ENCODE measurements at regions of chr10 and their contacts with region 1.

Region 1: DNA sequence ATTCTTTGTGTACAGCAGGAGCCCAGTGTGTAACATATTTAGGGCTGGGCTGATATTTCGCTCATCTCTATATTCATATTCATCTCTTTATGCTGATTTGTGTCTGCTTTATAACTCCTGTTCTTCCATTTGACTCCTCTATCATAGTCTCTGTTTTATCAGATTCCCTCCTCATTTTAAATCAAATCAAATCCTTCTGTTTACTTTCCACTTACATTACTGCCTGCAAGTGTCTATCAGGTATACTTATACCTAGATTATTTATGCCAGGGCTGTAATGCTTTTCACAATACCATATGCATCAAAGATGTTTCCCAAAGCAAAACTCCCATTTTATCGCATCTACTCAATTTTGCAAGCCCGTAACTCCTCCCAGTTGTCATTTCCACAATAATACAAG is 990.7 kb downstream of the SORCS1 start:
- DNase-seq: no peak
- ATAC-seq: no peak
- H3K4me3 ChIP-seq: no peak overlapping the region
- H3K27ac ChIP-seq: no peak overlapping the region
- H3K4me1 ChIP-seq: no peaks in the 10 kb centered on the region
- H3K27me3 ChIP-seq: no peaks in the 10 kb centered on the region
- CTCF ChIP-seq: no peak

Region 2: GRCh38 chr10:105950410-105950809 is 223.4 kb before region 1 on chr10:
- intact Hi-C with region 1: loop called in 1 of 3 experiments (anchors 5 kb)
- DNase-seq: peak in 5 of 6 donors; percentile 16 to 56 (median 35)
- ATAC-seq: peak; percentile 74 to 85 (median 79)
- H3K4me3 ChIP-seq: no peak overlapping the region
- H3K27ac ChIP-seq: no peak overlapping the region
- H3K4me1 ChIP-seq: peaks cover 0 to 7% (median 0%) of the 10 kb centered on the region in 3 donors
- H3K27me3 ChIP-seq: no peaks in the 10 kb centered on the region
- CTCF ChIP-seq: peak; percentile 57 to 79 (median 72)

Region 3: DNA sequence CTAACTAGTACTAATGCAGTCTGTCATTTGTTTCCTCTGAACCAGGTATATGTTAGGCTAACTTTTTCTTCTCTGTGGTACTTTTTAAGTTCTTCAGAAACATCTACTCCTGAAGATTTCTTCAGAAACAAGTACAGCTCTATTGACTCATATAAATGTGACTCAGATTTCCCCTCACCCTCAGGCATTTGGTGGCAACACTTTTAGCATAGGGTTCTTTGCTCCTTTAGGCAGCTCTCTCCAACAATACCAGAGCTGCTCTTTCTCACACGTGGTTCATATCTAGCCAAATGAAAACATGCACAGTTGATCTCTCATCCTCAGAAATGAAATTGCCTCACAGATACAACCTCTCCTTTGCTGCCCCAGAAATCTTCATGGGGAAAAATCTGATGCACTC is 50.8 kb after region 1 on chr10:
- intact Hi-C with region 1: no loop called
- DNase-seq: no peak
- ATAC-seq: no peak
- H3K4me3 ChIP-seq: no peak overlapping the region
- H3K27ac ChIP-seq: no peak overlapping the region
- H3K4me1 ChIP-seq: no peaks in the 10 kb centered on the region
- H3K27me3 ChIP-seq: no peaks in the 10 kb centered on the region
- CTCF ChIP-seq: no peak

Region 4: GRCh38 chr10:106424076-106424475 is 250.2 kb after region 1 on chr10:
- intact Hi-C with region 1: no loop called
- DNase-seq: no peak
- ATAC-seq: no peak
- H3K4me3 ChIP-seq: no peak overlapping the region
- H3K27ac ChIP-seq: no peak overlapping the region
- H3K4me1 ChIP-seq: no peaks in the 10 kb centered on the region
- H3K27me3 ChIP-seq: no peaks in the 10 kb centered on the region
- CTCF ChIP-seq: no peak

Measured in pancreas (tissue), 10 donors.